Right ventricle myocardium superior (tissue), 1 donor: ENCODE measurements at regions of chr1 and their contacts with region 1.

Region 1: DNA sequence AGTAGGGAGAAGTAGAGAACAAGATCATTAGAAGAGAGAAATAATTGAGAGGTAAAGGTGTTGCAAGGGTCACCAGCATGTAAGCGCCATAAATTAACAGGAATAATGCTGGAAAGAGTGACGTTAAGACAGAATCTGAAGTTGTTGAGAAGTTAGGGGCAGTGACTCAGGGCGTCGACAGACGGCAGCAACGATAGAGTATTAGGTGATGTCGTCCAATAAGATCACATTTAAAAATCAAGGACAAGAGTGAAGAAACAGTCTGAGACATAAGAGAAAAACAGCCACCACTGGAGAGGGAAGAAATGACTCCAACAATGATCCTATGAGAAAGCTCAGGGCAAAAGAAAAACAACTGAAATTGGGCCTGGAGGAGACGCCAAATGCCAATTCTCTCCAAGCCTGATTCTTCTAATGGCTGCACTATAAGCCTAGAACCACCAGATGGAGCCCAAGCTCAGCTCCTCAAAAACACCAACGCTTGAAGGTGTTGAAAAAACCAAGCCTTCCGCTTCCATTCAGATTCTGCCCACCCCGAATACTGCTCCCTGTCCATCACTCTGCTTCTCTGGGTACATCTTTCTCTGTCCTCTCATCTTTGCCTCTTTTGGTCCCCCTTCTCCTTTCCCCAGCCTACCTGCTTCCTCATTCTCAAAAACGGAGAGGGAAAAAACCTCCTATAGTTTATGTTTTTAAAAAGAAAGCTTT is 70.0 kb downstream of the LUZP1 start:
- DNase-seq: no peak
- ATAC-seq: peak; percentile 79

Region 2: DNA sequence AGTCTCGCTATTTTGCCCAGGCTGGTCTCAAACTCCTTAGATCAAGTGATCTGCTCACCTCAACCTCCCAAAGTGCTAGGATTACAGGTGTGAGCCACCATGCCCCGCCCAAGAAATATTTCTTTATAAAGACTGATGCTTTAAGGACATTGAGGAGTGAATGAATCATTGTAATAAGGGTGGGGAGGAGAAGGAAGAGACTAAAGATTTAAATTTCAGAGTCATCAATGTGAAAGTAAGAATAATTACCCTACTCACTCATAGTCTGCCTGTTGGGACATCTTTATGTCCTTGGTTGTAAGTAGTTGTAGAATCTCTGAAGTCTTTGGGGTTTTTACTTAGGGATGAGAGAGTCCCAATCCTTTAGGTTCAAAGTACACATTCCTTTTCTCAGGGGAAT is 72.0 kb before region 1 on chr1:
- intact Hi-C with region 1: no loop called
- DNase-seq: no peak
- ATAC-seq: no peak

Region 3: GRCh38 chr1:23152966-23153684 is 54.5 kb after region 1 on chr1:
- intact Hi-C with region 1: no loop called
- DNase-seq: no peak
- ATAC-seq: no peak

Region 4: GRCh38 chr1:23177438-23178380 is 79.1 kb after region 1 on chr1:
- intact Hi-C with region 1: loop called (anchors 1 kb)
- DNase-seq: peak; percentile 91
- ATAC-seq: peak; percentile 94

Region 5: GRCh38 chr1:23330846-23331245 is 232.2 kb after region 1 on chr1:
- intact Hi-C with region 1: no loop called
- DNase-seq: no peak
- ATAC-seq: no peak